ENCODE measurements at regions of chr1 and their contacts with region 1.

Region 1: DNA sequence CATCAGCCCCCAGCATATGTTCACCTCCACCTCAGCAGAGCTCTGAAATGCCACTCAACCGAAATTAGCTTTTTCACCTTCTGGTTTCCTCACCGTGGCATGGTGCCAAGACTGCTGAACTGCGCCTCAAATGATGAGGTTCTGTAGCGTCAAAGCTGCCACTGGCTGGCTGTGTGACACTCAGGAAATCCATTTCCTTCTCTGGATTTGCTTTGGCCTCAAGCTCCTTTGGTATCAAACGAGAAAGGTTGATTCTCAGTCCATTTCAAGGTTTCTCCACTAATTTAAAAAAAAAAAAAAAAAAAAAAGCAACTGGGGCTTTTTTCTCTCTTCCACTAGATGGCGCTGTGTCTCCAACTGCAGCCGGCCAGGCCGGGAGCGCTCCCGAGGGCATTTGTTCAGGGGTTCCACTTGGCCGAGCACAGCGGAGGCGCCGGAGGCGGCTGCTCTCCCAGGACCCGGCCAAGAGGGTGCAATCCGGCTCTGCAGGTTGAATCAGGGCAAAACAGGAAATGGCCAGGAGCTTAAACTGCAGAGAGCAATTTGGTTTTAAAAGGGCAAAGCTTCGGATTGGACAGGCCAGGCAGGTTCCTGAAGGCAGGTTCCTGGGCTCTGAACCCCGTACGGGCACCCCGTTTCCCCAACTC is 26.5 kb upstream of the PLA2G2C start:
- DNase-seq: peak; percentile 86

Region 2: DNA sequence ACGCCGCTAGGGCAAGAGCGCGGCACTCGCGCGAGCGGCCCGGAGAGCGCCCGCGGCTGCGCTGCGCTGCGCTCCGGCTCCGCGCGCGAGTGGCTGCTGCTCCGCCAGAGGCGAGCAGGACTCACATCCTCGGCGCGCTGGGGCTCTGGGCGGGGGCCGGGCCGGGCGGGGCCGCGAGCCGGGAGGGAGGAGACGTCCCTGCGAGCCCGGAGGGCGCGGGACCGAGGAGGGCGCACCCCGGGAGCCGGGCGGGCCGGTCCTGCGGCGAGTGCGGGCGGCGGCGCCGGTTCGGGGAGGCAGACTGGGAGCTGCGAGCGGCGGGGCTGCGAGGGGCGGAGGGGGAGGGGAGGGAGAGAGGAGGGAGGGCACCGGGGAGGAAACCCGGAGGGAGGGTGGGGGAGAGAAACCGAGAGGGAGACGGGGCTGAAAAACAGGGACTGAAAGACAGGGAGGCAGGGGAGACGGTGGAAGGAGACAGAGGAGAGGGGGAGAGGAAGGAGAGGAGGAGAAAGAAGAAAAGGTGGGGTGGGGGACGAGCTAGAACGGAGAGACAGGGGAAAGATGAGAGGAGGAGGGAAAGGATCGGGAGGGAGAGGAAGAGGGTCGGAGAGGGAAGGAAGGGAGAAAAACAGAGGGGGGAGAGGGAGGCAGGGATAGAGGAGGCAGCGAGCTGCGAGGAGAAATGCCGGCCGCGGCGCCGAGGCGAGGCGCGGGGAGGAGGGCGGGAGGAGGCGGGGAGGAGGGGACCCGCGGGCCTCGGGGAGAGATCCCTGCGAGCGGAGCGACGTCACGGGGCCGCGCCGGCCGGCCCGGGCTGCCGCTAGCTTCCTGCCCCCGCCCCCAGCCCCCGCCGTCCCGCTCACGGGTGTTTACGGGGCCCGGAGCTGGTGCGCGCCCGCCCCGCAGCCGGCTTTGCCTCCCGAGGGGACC is 273.0 kb after region 1 on chr1 and contains the start of gene CAMK2N1:
- intact Hi-C with region 1: loop called (anchors 5 kb)
- DNase-seq: peak; percentile 89
- total RNA-seq, gene CAMK2N1: 12.3 to 22.9 TPM